Ascending aorta (tissue), 2 donors: ENCODE measurements at regions of chr6 and their contacts with region 1.

Region 1: DNA sequence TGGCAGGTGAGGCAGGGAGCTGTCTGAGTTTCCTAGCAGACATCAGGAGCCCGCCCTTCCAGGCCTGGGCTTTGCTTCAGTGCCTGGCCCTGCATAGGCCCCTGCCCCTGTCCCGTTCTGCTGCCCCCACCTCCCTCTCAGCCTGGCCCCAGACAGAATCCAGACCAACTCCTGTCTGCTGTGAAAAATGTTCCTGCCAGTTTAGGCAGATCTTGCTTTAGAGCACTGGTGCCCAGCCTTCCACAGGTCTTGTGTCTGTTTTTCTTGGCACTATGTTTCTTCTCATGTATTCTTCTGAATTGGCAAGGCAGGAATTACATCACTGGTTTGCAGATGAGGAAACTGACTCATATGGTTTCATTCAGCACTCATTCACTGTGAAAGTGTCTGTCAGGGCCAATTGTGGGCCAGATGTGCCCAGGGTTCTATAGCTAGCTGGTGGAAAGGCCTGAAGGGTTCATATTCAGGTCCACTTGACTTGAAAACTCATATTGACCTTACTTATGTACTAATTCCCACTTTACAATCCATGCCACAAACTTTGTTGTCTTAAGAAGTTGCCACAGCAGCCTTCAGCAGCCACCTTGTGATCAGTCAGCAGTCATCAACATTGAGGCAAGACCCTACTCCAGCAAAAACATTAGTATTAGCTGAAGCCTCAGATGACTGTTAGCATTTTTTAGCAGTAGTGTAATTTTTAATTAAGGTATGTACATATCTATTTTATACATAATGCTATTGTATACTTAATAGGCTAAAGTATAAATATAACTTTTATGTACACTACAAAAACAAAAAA is 40.5 kb downstream of the HLA-F start:
- DNase-seq: no peak
- H3K4me3 ChIP-seq: no peak overlapping the region
- H3K27ac ChIP-seq: peak overlapping the region; percentile 56 to 74
- H3K4me1 ChIP-seq: peaks cover 0 to 13% of the 10 kb centered on the region in 2 donors
- H3K27me3 ChIP-seq: no peaks in the 10 kb centered on the region
- CTCF ChIP-seq: no peak

Region 2: GRCh38 chr6:29537714-29538403 is 225.8 kb before region 1 on chr6:
- intact Hi-C with region 1: no loop called
- DNase-seq: no peak
- H3K4me3 ChIP-seq: no peak overlapping the region
- H3K27ac ChIP-seq: no peak overlapping the region
- H3K4me1 ChIP-seq: no peaks in the 10 kb centered on the region
- H3K27me3 ChIP-seq: no peaks in the 10 kb centered on the region
- CTCF ChIP-seq: no peak

Region 3: GRCh38 chr6:29723262-29723665 is 40.4 kb before region 1 on chr6 and contains the start of gene HLA-F:
- intact Hi-C with region 1: loop called (anchors 5 kb)
- DNase-seq: peak; percentile 81 to 96
- H3K4me3 ChIP-seq: peak within 1 kb of the TSS; percentile 85 to 94
- H3K27ac ChIP-seq: peak within 1 kb of the TSS; percentile 87 to 93
- H3K4me1 ChIP-seq: peaks cover 12 to 13% of the 10 kb centered on the region in 2 donors
- H3K27me3 ChIP-seq: no peaks in the 10 kb centered on the region
- CTCF ChIP-seq: no peak
- total RNA-seq, gene HLA-F: 75.0 TPM